ENCODE measurements at regions of chr6 and their contacts with region 1.

Region 1: GRCh38 chr6:108165714-108166663 is at the start of gene NR2E1:
- DNase-seq: no peak
- ATAC-seq: no peak
- H3K4me3 ChIP-seq: no peak within 1 kb of the TSS
- H3K27ac ChIP-seq: no peak within 1 kb of the TSS
- H3K4me1 ChIP-seq: no peaks in the 10 kb centered on the region
- H3K27me3 ChIP-seq: peaks cover 6% of the 10 kb centered on the region; the same call in 1 of the 2 replicates
- CTCF ChIP-seq: no peak
- total RNA-seq, gene NR2E1: 0.07 TPM in 1 of 2 replicates, not detected in the other

Region 2: GRCh38 chr6:107235511-107235910 is 930.5 kb before region 1 on chr6:
- CTCF ChIA-PET with region 1: no interaction called
- POLR2A ChIA-PET with region 1: interaction called, 15 read pairs
- intact Hi-C with region 1: no loop called
- DNase-seq: no peak
- ATAC-seq: no peak
- H3K4me3 ChIP-seq: no peak overlapping the region
- H3K27ac ChIP-seq: no peak overlapping the region
- H3K4me1 ChIP-seq: no peaks in the 10 kb centered on the region
- H3K27me3 ChIP-seq: no peaks in the 10 kb centered on the region
- CTCF ChIP-seq: no peak

Region 3: GRCh38 chr6:108211644-108212043 is 45.7 kb after region 1 on chr6:
- CTCF ChIA-PET with region 1: no interaction called
- POLR2A ChIA-PET with region 1: no interaction called
- intact Hi-C with region 1: no loop called
- DNase-seq: peak; percentile 35
- ATAC-seq: no peak
- H3K4me3 ChIP-seq: no peak overlapping the region
- H3K27ac ChIP-seq: no peak overlapping the region
- H3K4me1 ChIP-seq: no peaks in the 10 kb centered on the region
- H3K27me3 ChIP-seq: no peaks in the 10 kb centered on the region
- CTCF ChIP-seq: no peak